ENCODE measurements at regions of chr3 and their contacts with region 1.

Region 1: GRCh38 chr3:51391568-51392286 is 642 bp downstream of the RBM15B start:
- DNase-seq: peak in 3 of 10 donors; percentile 28 to 85 (median 80)

Region 2: GRCh38 chr3:51591231-51591630 is 199.5 kb after region 1 on chr3:
- intact Hi-C with region 1: no loop called
- DNase-seq: no peak

Region 3: DNA sequence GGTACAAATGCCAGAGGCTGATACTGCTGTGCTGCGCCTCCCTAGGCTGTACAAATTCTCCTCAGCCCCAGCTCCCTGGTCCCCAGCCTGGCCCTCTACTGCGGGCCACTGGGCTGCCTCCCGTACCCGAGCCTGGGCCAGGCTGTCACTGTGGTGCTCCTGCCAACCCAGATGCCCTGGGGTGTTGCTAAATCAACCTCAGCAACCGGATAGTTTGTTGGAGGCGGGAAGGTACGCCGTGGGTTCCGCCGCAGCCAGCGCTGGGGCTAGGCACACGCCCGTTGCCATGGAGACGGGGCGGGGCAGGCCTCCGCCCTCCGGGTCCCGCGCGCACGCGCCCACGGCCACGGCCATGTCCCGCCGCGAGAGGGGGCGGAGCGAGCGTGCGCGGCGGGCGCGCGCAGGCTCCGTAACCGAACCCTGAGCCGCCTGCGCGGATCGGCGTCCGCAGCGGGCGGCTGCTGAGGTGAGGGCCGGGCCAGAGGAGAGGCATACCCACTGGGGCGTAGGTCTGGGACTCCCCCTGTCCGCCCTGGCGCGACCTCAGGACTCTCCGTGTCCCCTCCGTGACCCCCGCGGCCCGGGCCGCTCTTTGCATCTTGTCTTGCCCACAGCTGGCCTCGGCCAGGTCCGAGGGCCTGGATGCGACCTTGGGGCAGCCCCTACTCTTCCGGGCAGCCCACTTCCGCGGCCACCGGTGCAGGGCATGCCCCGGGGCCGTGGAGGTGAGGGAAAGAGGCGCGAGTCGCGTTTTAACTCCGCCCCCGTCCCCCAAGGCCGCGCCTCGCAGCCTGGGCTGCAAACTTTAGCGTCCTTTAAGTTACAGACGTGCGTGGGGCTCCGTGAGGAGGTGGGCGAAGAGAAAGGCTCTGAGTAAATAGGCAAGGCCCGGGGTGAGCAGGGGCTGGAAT is 279.4 kb after region 1 on chr3 and contains the start of gene TEX264:
- intact Hi-C with region 1: loop called (anchors 2 kb)
- DNase-seq: peak; percentile 72 to 98 (median 84)

Measured in posterior cingulate gyrus (tissue), 11 donors.